ENCODE measurements at regions of chr7 and their contacts with region 1.

Region 1: DNA sequence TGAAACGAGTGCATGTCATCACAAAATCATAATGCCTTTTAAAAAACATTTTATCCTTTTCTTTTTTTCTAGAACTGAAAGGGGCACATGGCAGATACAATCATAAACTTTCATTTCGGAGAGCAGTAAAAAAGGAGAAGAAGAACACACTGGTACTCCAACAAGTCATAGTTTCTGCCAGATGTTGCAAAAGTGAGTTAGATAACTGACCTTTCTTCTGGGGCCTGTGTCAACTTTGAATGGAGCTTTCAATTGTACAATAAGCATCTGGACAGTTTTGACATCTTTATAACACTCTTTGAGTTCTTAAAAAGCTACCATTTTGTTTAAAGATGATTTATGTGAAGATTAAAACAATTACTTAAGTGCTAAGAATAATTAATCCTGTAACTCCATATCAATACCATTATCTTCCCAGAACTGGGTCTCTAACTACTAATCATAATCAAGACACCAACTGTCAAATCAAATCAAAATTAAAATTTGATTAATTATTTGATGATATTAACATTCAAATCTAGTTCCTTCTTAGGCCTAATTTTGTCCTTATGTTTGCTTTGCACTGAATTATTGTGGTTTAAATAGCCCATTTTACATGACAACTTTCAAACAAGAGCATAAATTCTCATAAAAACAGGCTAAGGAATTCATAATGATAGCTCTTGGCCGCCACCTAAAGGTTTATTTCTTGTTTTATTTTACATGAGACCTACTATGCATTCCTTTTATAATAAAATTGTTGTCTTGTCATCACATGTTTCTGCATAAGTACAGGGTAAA is 19.5 kb upstream of the ITGB8 start:
- DNase-seq: no peak
- H3K4me3 ChIP-seq: no peak overlapping the region
- H3K27ac ChIP-seq: no peak overlapping the region
- H3K4me1 ChIP-seq: peaks cover 0 to 22% (median 0%) of the 10 kb centered on the region in 4 donors
- H3K27me3 ChIP-seq: no peaks in the 10 kb centered on the region
- CTCF ChIP-seq: peak; percentile 38 to 65 (median 47)
- EP300 ChIP-seq: no peak
- POLR2A ChIP-seq: no peak

Region 2: DNA sequence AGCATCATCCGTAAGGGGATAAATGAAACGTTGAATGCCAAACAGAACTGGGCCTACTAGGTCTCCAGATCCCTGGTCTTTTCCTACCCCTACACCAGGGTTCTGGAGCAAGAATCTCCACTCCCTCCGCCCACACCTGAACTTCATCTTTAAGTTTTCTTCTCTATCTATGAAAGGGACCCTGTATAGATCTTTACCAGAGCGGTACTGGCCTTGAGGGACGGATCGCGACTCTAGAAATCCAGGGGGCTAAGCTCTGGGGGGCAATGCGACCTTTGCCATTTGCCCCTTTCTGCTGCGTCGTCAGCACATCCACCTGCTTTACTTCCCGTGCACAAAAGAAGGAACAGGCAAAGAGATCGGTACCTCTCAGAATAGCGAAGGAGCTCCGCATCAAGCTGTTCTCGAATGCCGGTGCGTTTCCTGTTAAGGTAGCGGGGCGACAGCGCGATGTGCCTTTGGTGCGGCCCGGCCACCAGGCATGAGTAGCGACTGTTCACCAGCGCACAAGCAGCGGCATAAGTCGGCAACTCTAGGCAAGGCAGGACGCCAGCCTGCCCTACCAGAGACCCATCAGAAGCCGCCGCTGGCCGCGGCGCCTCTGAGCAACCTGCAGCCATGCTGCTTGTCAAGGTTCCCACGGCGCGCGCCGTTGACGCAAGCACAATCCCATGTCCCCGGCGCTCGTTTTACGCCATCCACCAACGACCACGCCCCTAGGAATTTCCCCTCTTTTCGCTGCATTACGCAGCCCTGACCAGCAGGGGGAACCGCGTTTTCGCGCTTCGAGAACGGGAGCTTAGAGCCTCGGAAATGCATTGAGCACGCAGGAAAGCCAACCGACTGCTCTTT is 602.5 kb before region 1 on chr7 and contains the start of gene POLR1F:
- in situ Hi-C with region 1: loop called in 1 of 4 experiments (anchors 25 kb)
- intact Hi-C with region 1: no loop called
- DNase-seq: peak; percentile 95
- H3K4me3 ChIP-seq: peak within 1 kb of the TSS; percentile 73 to 90 (median 80)
- H3K27ac ChIP-seq: peak within 1 kb of the TSS; percentile 77 to 83 (median 82)
- H3K4me1 ChIP-seq: peaks cover 5 to 20% (median 14%) of the 10 kb centered on the region in 4 donors
- H3K27me3 ChIP-seq: no peaks in the 10 kb centered on the region
- CTCF ChIP-seq: peak; percentile 85 to 89 (median 88)
- EP300 ChIP-seq: no peak
- POLR2A ChIP-seq: peak; percentile 83
- total RNA-seq, gene POLR1F: 0.20 to 7.5 (median 3.7) TPM

Region 3: GRCh38 chr7:19982841-19983835 is 328.0 kb before region 1 on chr7:
- in situ Hi-C with region 1: loop called in 2 of 4 experiments (anchors 25 kb)
- intact Hi-C with region 1: no loop called
- DNase-seq: peak; percentile 46
- H3K4me3 ChIP-seq: no peak overlapping the region
- H3K27ac ChIP-seq: no peak overlapping the region
- H3K4me1 ChIP-seq: no peaks in the 10 kb centered on the region
- H3K27me3 ChIP-seq: no peaks in the 10 kb centered on the region
- CTCF ChIP-seq: peak; percentile 26 to 36 (median 28)
- EP300 ChIP-seq: no peak
- POLR2A ChIP-seq: no peak

Region 4: DNA sequence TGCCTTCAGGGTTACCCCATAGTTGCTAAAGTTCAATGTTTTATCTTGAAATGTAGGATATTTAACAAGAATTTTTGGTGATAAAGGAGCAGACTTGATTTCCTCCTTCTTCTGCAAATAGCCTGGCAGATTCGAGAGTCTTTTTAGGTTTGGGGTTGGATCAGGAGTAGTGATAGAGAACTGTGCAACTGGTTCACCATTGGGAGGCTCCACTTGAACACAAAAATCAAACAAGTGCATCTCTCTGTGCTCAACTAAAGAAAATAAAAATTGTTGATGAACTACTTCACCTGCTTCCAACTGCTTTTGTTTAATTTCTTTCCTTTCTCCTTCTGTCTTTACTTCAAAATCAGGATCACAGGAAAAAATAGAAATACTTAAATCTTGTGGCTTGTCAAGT is 152.5 kb before region 1 on chr7:
- in situ Hi-C with region 1: loop called in 2 of 4 experiments (anchors 10 to 25 kb)
- intact Hi-C with region 1: no loop called
- DNase-seq: no peak
- H3K4me3 ChIP-seq: no peak overlapping the region
- H3K27ac ChIP-seq: no peak overlapping the region
- H3K4me1 ChIP-seq: peaks cover 0 to 9% (median 0%) of the 10 kb centered on the region in 4 donors
- H3K27me3 ChIP-seq: no peaks in the 10 kb centered on the region
- CTCF ChIP-seq: peak in 4 of 5 experiments; percentile 11 to 23 (median 16)
- EP300 ChIP-seq: no peak
- POLR2A ChIP-seq: no peak

Region 5: GRCh38 chr7:20172736-20173334 is 138.3 kb before region 1 on chr7:
- in situ Hi-C with region 1: loop called in 1 of 4 experiments (anchors 25 kb)
- intact Hi-C with region 1: no loop called
- DNase-seq: peak; percentile 62
- H3K4me3 ChIP-seq: no peak overlapping the region
- H3K27ac ChIP-seq: no peak overlapping the region
- H3K4me1 ChIP-seq: peaks cover 0 to 8% (median 2%) of the 10 kb centered on the region in 4 donors
- H3K27me3 ChIP-seq: no peaks in the 10 kb centered on the region
- CTCF ChIP-seq: peak; percentile 35 to 56 (median 43)
- EP300 ChIP-seq: no peak
- POLR2A ChIP-seq: no peak

Region 6: GRCh38 chr7:20270867-20271266 is 40.3 kb before region 1 on chr7:
- in situ Hi-C with region 1: no loop called
- intact Hi-C with region 1: no loop called
- DNase-seq: no peak
- H3K4me3 ChIP-seq: no peak overlapping the region
- H3K27ac ChIP-seq: no peak overlapping the region
- H3K4me1 ChIP-seq: no peaks in the 10 kb centered on the region
- H3K27me3 ChIP-seq: no peaks in the 10 kb centered on the region
- CTCF ChIP-seq: no peak
- EP300 ChIP-seq: no peak
- POLR2A ChIP-seq: no peak

Measured in transverse colon (tissue), 4 donors.